A673 (cell line): ENCODE measurements at regions of chr11 and their contacts with region 1.

Region 1: DNA sequence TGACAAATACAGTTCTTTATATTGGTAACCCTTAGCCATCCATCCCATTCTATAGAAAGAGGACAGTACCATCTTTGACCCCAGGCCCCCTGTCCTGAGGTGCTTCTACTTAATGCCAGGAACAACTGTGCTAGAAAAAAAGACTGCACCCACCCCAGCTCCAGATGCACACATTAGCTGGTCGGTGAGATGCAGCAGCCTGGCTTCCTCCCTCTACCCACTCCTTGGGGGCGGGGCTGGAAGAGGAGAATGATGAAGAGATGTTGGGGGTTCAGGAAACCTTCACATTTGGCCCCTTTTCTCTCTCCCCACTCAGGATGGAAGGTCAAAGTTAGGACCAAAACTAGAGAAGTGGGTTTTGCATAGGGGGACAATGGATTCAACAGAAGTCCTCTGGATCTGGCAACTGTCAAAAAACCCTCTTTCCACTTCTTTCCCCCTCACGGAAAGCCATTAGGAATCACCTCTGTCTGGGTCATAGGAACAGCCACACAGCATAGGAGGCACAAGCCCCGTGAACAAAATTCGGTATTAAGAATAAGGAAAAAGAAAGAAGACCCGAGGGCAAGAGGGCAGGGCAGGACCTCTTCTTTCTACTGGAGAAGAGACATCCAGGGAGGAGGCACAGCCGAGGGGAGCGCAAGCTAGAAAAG is 755 bp downstream of the NRIP3 start:
- DNase-seq: no peak
- H3K4me3 ChIP-seq: peak overlapping the region; percentile 26
- H3K27ac ChIP-seq: no peak overlapping the region
- H3K4me1 ChIP-seq: peaks cover 14% of the 10 kb centered on the region
- H3K27me3 ChIP-seq: peaks cover 42% of the 10 kb centered on the region
- CTCF ChIP-seq: no peak

Region 2: DNA sequence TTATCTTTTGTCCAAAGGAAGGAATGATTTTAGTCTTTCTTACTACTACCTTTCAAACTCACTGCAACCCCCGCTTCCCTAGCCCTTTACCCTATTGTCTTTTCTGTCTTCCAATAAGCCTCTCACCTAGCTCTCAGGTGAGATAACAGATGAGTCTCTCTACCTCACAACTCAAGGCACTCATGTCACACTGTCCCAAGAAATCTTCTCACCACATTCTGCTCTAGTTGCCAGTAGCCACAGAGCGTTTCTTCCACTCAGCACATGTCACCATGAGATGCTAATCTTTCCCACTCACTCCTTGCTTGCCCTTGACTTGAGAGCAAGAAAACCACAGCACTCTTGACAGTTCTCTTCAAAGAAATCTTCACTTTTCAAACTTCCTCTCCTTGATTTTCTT is 344.1 kb after region 1 on chr11:
- CTCF ChIA-PET with region 1: no interaction called
- POLR2A ChIA-PET with region 1: interaction called, 13 read pairs
- intact Hi-C with region 1: no loop called
- DNase-seq: no peak
- H3K4me3 ChIP-seq: no peak overlapping the region
- H3K27ac ChIP-seq: no peak overlapping the region
- H3K4me1 ChIP-seq: no peaks in the 10 kb centered on the region
- H3K27me3 ChIP-seq: no peaks in the 10 kb centered on the region
- CTCF ChIP-seq: no peak